Dendritic cell treated with granulocyte-macrophage colony-stimulating factor and Interleukin-4, amounts not matched to agents 40 ng/mL and 50 ng/mL, for 4 days (primary cell): ENCODE measurements at regions of chr1 and their contacts with region 1.

Region 1: DNA sequence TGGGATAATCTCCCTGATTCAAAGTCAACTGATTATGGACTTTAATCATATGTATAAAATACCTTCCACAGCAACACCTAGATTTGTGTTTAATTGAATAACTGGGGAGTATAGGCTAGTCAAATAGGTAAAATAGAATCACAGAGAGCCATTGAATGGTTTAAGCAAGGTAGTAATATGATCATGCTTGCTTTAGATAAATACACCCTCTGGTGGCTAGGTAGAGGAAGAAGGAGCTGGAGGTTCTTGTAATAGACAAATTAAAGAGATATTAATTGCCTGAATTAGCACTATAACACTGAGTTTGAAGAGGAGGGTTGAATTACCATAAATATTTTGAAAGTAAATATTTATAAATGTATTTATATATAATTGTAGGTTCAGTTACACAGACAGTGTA is 40.3 kb downstream of the DIRAS3 start:
- H3K4me3 Mint-ChIP-seq: no peak overlapping the region
- H3K27ac Mint-ChIP-seq: no peak overlapping the region
- H3K4me1 Mint-ChIP-seq: no peaks in the 10 kb centered on the region
- H3K27me3 Mint-ChIP-seq: no peaks in the 10 kb centered on the region

Region 2: GRCh38 chr1:68074472-68074871 is 64.4 kb after region 1 on chr1:
- intact Hi-C with region 1: loop called (anchors 10 kb)
- H3K4me3 Mint-ChIP-seq: no peak overlapping the region
- H3K27ac Mint-ChIP-seq: no peak overlapping the region
- H3K4me1 Mint-ChIP-seq: no peaks in the 10 kb centered on the region
- H3K27me3 Mint-ChIP-seq: peaks cover 3% of the 10 kb centered on the region